ENCODE measurements at regions of chr1 and their contacts with region 1.

Region 1: GRCh38 chr1:78607334-78607927 is 12.8 kb upstream of the IFI44L start:
- DNase-seq: peak; percentile 16
- ATAC-seq: no peak
- H3K4me3 ChIP-seq: no peak overlapping the region
- H3K27ac ChIP-seq: no peak overlapping the region
- H3K4me1 ChIP-seq: no peaks in the 10 kb centered on the region
- H3K27me3 ChIP-seq: no peaks in the 10 kb centered on the region
- CTCF ChIP-seq: peak; percentile 32 to 66 (median 62)
- POLR2A ChIP-seq: no peak
- RAD21 ChIP-seq: peak; percentile 76

Region 2: DNA sequence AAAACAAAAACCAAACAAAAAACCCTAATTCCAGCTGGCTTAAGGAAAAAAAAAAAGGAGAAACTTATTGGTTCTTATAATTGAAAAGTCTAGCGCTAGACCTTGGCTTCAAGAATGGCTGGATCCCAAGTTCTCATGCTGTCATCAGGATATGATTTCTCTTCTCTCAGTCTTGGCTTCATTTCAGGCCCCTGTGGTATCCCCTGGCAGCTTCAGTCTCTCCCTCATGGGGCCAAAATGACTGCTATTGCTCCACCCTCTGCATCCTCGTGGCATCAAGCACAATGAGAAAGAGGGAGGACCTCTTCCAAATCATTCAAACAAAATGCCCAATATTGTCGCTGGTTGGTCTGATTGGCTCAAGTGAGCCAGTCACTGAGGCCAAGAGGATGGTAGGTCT is 480.9 kb before region 1 on chr1:
- CTCF ChIA-PET with region 1: interaction called, 40 read pairs
- POLR2A ChIA-PET with region 1: no interaction called
- RAD21 ChIA-PET with region 1: interaction called in 1 of 2 experiments, 3 read pairs
- intact Hi-C with region 1: loop called (anchors 1 kb)
- DNase-seq: no peak
- ATAC-seq: no peak
- H3K4me3 ChIP-seq: no peak overlapping the region
- H3K27ac ChIP-seq: no peak overlapping the region
- H3K4me1 ChIP-seq: no peaks in the 10 kb centered on the region
- H3K27me3 ChIP-seq: no peaks in the 10 kb centered on the region
- CTCF ChIP-seq: no peak
- POLR2A ChIP-seq: no peak
- RAD21 ChIP-seq: no peak

Region 3: GRCh38 chr1:78132174-78132947 is 475.1 kb before region 1 on chr1:
- CTCF ChIA-PET with region 1: interaction called, 40 read pairs
- POLR2A ChIA-PET with region 1: no interaction called
- RAD21 ChIA-PET with region 1: interaction called in 1 of 2 experiments, 3 read pairs
- intact Hi-C with region 1: loop called (anchors 1 kb)
- DNase-seq: no peak
- ATAC-seq: no peak
- H3K4me3 ChIP-seq: no peak overlapping the region
- H3K27ac ChIP-seq: no peak overlapping the region
- H3K4me1 ChIP-seq: no peaks in the 10 kb centered on the region
- H3K27me3 ChIP-seq: no peaks in the 10 kb centered on the region
- CTCF ChIP-seq: no peak
- POLR2A ChIP-seq: no peak
- RAD21 ChIP-seq: no peak

Region 4: DNA sequence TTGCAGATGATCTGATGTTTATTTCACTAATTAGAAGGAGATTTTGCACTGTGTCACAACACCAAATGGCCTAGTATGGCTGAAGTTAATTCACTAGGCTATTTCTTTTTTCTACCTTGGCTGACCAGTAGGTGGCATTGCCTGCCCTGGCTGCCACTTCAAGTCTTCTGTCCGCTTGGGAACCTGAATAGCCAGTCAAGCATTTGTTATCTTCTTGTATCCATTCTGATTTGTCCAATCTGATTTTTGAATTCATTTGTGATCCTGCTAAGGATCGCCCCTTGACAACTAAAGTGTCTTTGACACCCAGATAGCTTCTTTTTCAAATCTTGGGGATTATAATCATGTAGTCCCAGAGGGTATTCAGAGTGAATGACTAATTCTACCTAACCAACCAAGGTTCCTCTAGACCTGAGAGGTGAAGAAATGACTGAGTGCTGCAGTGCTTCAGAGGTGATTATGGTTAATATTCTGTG is 462.3 kb before region 1 on chr1:
- CTCF ChIA-PET with region 1: interaction called, 6 read pairs
- POLR2A ChIA-PET with region 1: no interaction called
- RAD21 ChIA-PET with region 1: no interaction called
- intact Hi-C with region 1: loop called (anchors 1 kb)
- DNase-seq: peak; percentile 56
- ATAC-seq: peak; percentile 89
- H3K4me3 ChIP-seq: no peak overlapping the region
- H3K27ac ChIP-seq: no peak overlapping the region
- H3K4me1 ChIP-seq: no peaks in the 10 kb centered on the region
- H3K27me3 ChIP-seq: no peaks in the 10 kb centered on the region
- CTCF ChIP-seq: peak; percentile 83 to 88 (median 85)
- POLR2A ChIP-seq: no peak
- RAD21 ChIP-seq: peak; percentile 89

Region 5: DNA sequence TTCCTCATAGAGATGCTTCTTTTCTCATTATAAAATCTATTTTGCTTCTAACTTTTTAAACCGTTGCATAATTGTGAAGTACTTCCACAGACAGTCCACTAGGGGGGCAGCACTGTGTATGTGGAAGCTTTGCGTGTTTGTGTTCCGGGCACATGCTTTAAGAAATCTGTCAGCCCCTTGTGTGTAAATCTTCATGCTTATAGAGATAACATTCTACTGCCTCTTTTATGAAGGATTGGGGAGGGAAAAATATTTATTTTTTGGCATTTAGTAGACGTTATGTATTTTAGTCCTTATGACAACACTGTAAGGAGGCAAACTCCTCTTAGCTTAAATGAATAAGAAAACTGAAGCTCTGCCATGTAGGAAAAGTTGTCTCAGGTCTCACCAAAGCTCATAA is 273.9 kb before region 1 on chr1:
- CTCF ChIA-PET with region 1: no interaction called
- POLR2A ChIA-PET with region 1: no interaction called
- RAD21 ChIA-PET with region 1: no interaction called
- intact Hi-C with region 1: loop called (anchors 5 kb)
- DNase-seq: peak; percentile 37
- ATAC-seq: peak; percentile 86
- H3K4me3 ChIP-seq: no peak overlapping the region
- H3K27ac ChIP-seq: no peak overlapping the region
- H3K4me1 ChIP-seq: peaks cover 0 to 4% of the 10 kb centered on the region in 2 experiments; a peak in 1 of 4 replicates
- H3K27me3 ChIP-seq: no peaks in the 10 kb centered on the region
- CTCF ChIP-seq: peak; percentile 36 to 90 (median 87); a peak in 5 of 6 replicates
- POLR2A ChIP-seq: no peak
- RAD21 ChIP-seq: peak; percentile 42

Region 6: GRCh38 chr1:78617615-78618026 is 10.2 kb after region 1 on chr1:
- CTCF ChIA-PET with region 1: interaction called, 11 read pairs
- POLR2A ChIA-PET with region 1: no interaction called
- RAD21 ChIA-PET with region 1: no interaction called
- intact Hi-C with region 1: no loop called
- DNase-seq: peak; percentile 79
- ATAC-seq: peak; percentile 92
- H3K4me3 ChIP-seq: no peak overlapping the region
- H3K27ac ChIP-seq: no peak overlapping the region
- H3K4me1 ChIP-seq: peaks cover 0 to 3% of the 10 kb centered on the region in 2 experiments; a peak in 2 of 4 replicates
- H3K27me3 ChIP-seq: no peaks in the 10 kb centered on the region
- CTCF ChIP-seq: peak; percentile 70 to 85 (median 79)
- POLR2A ChIP-seq: no peak
- RAD21 ChIP-seq: peak; percentile 79